ENCODE measurements at regions of chr2 and their contacts with region 1.

Region 1: DNA sequence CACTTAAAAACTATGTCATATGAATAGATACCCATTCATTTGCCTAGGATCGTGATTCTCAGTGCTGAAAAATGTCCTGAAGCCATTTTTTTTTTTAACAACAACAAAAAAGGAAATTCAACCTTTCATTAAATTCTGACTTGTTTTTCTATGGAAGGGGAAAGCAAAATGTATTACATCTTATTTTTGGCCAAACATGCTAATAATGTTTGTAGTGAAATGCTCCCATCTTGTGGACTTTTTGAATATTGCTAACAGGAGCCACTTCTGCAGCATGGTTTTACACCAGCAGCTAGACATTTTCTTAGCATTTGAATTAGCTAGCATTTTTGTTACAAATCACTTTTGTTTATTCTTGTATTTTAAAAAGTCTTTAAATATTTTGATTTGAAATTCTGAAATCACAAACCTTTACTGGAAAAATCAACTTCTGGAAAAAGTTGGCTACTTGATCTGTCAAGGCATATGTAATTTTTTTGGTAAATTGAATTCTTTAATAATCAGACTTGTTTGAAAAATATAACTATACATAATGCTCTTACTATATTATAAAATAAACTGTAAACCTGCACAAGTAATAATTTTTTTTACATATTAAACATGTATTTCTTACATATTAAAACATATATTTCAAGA is 75.8 kb downstream of the KIDINS220 start:
- DNase-seq: peak in 1 of 2 donors; percentile 52
- ATAC-seq: peak in 2 of 3 donors; percentile 46 to 51
- H3K4me3 ChIP-seq: no peak overlapping the region
- H3K4me3 Mint-ChIP-seq: no peak overlapping the region
- H3K27ac ChIP-seq: no peak overlapping the region
- H3K27ac Mint-ChIP-seq: no peak overlapping the region
- H3K4me1 ChIP-seq: no peaks in the 10 kb centered on the region
- H3K4me1 Mint-ChIP-seq: peaks cover 0 to 9% of the 10 kb centered on the region in 2 donors
- H3K27me3 ChIP-seq: no peaks in the 10 kb centered on the region
- H3K27me3 Mint-ChIP-seq: no peaks in the 10 kb centered on the region
- CTCF ChIP-seq: peak; percentile 63

Region 2: DNA sequence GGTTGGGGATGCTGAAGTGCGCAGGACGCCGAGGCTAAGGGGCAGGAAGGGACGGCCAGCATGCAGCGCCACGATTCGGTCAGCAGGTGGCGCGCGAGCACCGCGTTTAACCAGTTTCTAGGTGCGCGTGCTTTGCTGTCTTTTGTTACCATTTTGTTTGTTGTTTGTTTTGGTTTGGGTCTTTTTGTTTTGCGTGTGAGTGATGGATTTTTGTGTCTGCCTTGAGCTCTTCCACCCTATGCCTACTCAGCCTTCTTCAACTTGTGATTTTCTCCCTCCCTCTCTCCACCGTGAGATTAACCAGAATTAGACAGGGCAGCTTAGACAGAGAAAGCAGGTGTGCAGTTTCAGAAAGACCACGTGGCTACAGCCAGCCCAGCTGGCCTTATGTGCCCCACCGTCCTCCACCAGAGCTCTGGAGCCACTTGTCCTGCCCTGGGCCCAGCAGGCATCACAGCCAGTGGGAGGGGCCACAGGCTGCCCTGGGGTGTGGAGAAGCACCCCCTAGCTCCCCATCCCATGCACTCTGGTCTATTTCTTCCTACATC is 1664.2 kb before region 1 on chr2:
- intact Hi-C with region 1: loop called (anchors 1 kb)
- DNase-seq: peak; percentile 73 to 84
- ATAC-seq: peak; percentile 89 to 97 (median 96)
- H3K4me3 ChIP-seq: no peak overlapping the region
- H3K4me3 Mint-ChIP-seq: peak overlapping the region; percentile 59
- H3K27ac ChIP-seq: no peak overlapping the region
- H3K27ac Mint-ChIP-seq: no peak overlapping the region
- H3K4me1 ChIP-seq: peaks cover 7% of the 10 kb centered on the region
- H3K4me1 Mint-ChIP-seq: peaks cover 6 to 8% of the 10 kb centered on the region in 2 donors
- H3K27me3 ChIP-seq: no peaks in the 10 kb centered on the region
- H3K27me3 Mint-ChIP-seq: no peaks in the 10 kb centered on the region
- CTCF ChIP-seq: peak; percentile 99

Region 3: DNA sequence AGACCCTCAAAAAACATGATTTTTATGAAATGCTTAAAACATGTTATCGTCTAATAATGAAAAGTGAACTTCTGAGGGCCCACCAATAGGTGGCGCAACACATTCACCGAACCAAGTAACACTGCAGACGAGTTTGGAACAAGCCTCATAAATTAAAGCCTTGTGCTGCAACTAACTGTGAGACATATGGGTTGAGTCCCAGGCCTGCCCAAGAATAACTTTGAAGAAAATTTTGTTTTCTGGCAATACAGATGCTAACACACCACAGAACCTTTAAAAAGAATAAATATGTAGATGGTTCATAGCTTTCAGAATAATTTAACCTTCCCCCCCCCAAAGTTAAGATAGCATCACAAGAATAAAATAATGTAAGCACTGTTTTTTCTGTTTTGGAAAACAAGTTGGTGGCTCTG is 1558.6 kb before region 1 on chr2:
- intact Hi-C with region 1: loop called (anchors 1 kb)
- DNase-seq: peak; percentile 28 to 79
- ATAC-seq: peak; percentile 69 to 75 (median 74)
- H3K4me3 ChIP-seq: no peak overlapping the region
- H3K4me3 Mint-ChIP-seq: no peak overlapping the region
- H3K27ac ChIP-seq: no peak overlapping the region
- H3K27ac Mint-ChIP-seq: no peak overlapping the region
- H3K4me1 ChIP-seq: no peaks in the 10 kb centered on the region
- H3K4me1 Mint-ChIP-seq: no peaks in the 10 kb centered on the region
- H3K27me3 ChIP-seq: no peaks in the 10 kb centered on the region
- H3K27me3 Mint-ChIP-seq: peaks cover 3 to 7% of the 10 kb centered on the region in 2 donors
- CTCF ChIP-seq: peak; percentile 95

Region 4: GRCh38 chr2:7427293-7428060 is 1334.2 kb before region 1 on chr2:
- intact Hi-C with region 1: loop called (anchors 1 kb)
- DNase-seq: peak in 1 of 2 donors; percentile 84
- ATAC-seq: peak; percentile 50 to 66 (median 54)
- H3K4me3 ChIP-seq: no peak overlapping the region
- H3K4me3 Mint-ChIP-seq: no peak overlapping the region
- H3K27ac ChIP-seq: no peak overlapping the region
- H3K27ac Mint-ChIP-seq: peak overlapping the region in 1 of 2 donors; percentile 29
- H3K4me1 ChIP-seq: peaks cover 40% of the 10 kb centered on the region
- H3K4me1 Mint-ChIP-seq: peaks cover 50 to 52% of the 10 kb centered on the region in 2 donors
- H3K27me3 ChIP-seq: no peaks in the 10 kb centered on the region
- H3K27me3 Mint-ChIP-seq: no peaks in the 10 kb centered on the region
- CTCF ChIP-seq: peak; percentile 90

Region 5: GRCh38 chr2:8927510-8928455 is 166.1 kb after region 1 on chr2:
- intact Hi-C with region 1: no loop called
- DNase-seq: no peak
- ATAC-seq: no peak
- H3K4me3 ChIP-seq: no peak overlapping the region
- H3K4me3 Mint-ChIP-seq: no peak overlapping the region
- H3K27ac ChIP-seq: no peak overlapping the region
- H3K27ac Mint-ChIP-seq: no peak overlapping the region
- H3K4me1 ChIP-seq: no peaks in the 10 kb centered on the region
- H3K4me1 Mint-ChIP-seq: peaks cover 4 to 5% of the 10 kb centered on the region in 2 donors
- H3K27me3 ChIP-seq: no peaks in the 10 kb centered on the region
- H3K27me3 Mint-ChIP-seq: peaks cover 0 to 10% of the 10 kb centered on the region in 2 donors
- CTCF ChIP-seq: no peak

Region 6: GRCh38 chr2:10188216-10188615 is 1426.6 kb after region 1 on chr2:
- intact Hi-C with region 1: no loop called
- DNase-seq: no peak
- ATAC-seq: no peak
- H3K4me3 ChIP-seq: no peak overlapping the region
- H3K4me3 Mint-ChIP-seq: no peak overlapping the region
- H3K27ac ChIP-seq: no peak overlapping the region
- H3K27ac Mint-ChIP-seq: no peak overlapping the region
- H3K4me1 ChIP-seq: no peaks in the 10 kb centered on the region
- H3K4me1 Mint-ChIP-seq: peaks cover 0 to 22% of the 10 kb centered on the region in 2 donors
- H3K27me3 ChIP-seq: no peaks in the 10 kb centered on the region
- H3K27me3 Mint-ChIP-seq: no peaks in the 10 kb centered on the region
- CTCF ChIP-seq: no peak

Measured in natural killer cell (primary cell).